Psoas muscle (tissue), 8 donors: ENCODE measurements at regions of chr2 and their contacts with region 1.

Region 1: GRCh38 chr2:102806250-102806837 is 44.5 kb downstream of the TMEM182 start:
- DNase-seq: peak; percentile 69 to 83
- ATAC-seq: peak; percentile 79 to 86 (median 84)
- H3K4me3 ChIP-seq: no peak overlapping the region
- H3K27ac ChIP-seq: peak overlapping the region; percentile 71
- H3K4me1 ChIP-seq: peaks cover 76% of the 10 kb centered on the region
- H3K27me3 ChIP-seq: no peaks in the 10 kb centered on the region
- CTCF ChIP-seq: peak; percentile 85

Region 2: DNA sequence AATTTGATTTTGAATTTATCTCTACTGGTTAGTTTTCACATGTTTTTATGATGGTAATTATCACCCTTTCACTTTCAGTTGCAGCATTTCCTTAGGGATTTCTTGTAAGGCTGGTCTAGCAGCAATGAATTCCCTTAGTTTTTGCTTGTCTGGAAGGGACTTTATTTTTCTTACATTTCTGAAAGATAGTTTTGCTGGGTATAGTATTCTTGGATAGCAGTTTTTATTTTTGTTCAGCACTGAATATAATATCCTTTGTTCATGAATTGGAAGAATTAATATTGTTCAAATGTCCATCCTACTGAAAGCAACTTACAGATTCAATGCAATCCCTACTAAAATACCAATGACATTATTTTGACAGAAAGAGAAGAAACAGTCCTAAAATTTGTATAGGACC is 589.3 kb before region 1 on chr2:
- intact Hi-C with region 1: no loop called
- DNase-seq: no peak
- ATAC-seq: no peak
- H3K4me3 ChIP-seq: no peak overlapping the region
- H3K27ac ChIP-seq: no peak overlapping the region
- H3K4me1 ChIP-seq: no peaks in the 10 kb centered on the region
- H3K27me3 ChIP-seq: no peaks in the 10 kb centered on the region
- CTCF ChIP-seq: no peak

Region 3: DNA sequence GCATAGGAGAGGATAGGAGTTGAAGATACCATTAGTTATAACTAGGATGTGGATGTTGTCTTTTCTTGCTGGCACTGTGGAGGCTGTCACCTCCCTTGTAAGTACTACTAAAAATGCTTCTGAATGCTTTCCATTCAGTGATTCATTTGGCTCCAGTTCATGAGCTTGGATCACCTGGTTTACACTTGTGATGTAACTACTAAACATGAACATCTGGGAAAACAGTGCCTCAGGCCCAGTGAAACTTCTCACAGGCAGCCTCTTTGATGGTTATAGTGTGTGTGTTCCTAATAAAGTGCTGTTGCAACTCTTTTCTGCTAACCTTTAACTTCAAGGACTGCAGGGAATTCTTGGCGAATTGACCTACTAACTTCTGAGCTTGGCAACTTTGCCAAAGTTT is 200.0 kb before region 1 on chr2:
- intact Hi-C with region 1: loop called in 1 of 2 experiments (anchors 10 kb)
- DNase-seq: no peak
- ATAC-seq: peak; percentile 45 to 83 (median 62)
- H3K4me3 ChIP-seq: no peak overlapping the region
- H3K27ac ChIP-seq: peak overlapping the region; percentile 83
- H3K4me1 ChIP-seq: peaks cover 17% of the 10 kb centered on the region
- H3K27me3 ChIP-seq: peaks cover 0 to 2% (median 0%) of the 10 kb centered on the region in 3 donors
- CTCF ChIP-seq: no peak

Region 4: GRCh38 chr2:102639429-102639828 is 166.9 kb before region 1 on chr2:
- intact Hi-C with region 1: no loop called
- DNase-seq: no peak
- ATAC-seq: no peak
- H3K4me3 ChIP-seq: no peak overlapping the region
- H3K27ac ChIP-seq: no peak overlapping the region
- H3K4me1 ChIP-seq: peaks cover 15% of the 10 kb centered on the region
- H3K27me3 ChIP-seq: no peaks in the 10 kb centered on the region
- CTCF ChIP-seq: no peak

Region 5: DNA sequence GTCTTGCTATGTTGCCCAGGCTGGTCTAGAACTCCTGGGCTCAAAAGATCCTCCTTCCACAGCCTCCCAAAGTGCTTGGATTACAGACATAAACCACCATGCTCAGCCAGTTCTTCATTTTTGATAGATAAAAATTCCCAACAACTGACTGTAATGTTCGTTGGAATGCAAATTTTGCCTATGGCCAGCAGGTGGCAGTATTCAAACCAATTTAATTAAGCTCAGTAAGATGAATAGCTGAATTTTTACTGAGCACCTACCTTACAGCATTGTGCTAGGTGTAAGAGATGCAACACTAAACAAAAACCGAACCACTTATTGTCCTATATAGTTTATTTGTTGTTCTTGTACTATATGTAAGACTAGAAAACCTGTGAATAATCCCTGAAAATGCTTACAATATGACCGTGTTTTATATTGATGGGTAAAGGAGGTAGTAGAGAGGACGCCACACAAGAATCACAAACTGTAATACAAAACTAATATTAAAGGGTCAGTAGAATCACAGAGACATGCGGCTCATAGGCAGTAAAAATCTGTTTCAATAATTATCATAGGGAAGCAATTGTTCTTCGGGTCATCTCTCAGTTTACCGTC is 52.7 kb before region 1 on chr2:
- intact Hi-C with region 1: loop called (anchors 1 to 2 kb)
- DNase-seq: no peak
- ATAC-seq: peak; percentile 61 to 76 (median 64)
- H3K4me3 ChIP-seq: no peak overlapping the region
- H3K27ac ChIP-seq: peak overlapping the region; percentile 66
- H3K4me1 ChIP-seq: peaks cover 23% of the 10 kb centered on the region
- H3K27me3 ChIP-seq: no peaks in the 10 kb centered on the region
- CTCF ChIP-seq: peak; percentile 82

Region 6: DNA sequence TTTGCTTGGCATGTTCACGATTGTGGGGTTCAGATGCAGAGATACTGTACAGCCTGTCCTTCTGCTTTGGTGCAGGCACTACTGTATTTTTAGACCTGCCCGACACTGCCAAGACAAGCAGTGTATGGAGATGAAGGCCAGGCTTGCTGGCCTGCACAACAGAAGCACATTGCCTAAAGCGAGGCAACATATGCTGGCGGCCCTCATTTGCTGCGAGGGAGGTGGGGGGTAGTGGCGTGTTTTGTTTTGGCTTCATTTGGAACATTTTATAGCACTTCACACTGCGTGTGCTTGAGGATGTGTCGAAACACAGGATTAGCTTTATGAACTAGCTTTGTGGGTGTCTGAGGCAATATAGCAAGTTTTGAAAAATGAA is 17.5 kb before region 1 on chr2:
- intact Hi-C with region 1: loop called in 1 of 2 experiments (anchors 2 kb)
- DNase-seq: peak in 1 of 2 donors; percentile 72
- ATAC-seq: peak; percentile 81 to 96 (median 88)
- H3K4me3 ChIP-seq: no peak overlapping the region
- H3K27ac ChIP-seq: peak overlapping the region; percentile 54
- H3K4me1 ChIP-seq: peaks cover 68% of the 10 kb centered on the region
- H3K27me3 ChIP-seq: no peaks in the 10 kb centered on the region
- CTCF ChIP-seq: no peak

Region 7: GRCh38 chr2:102872388-102872787 is 66.0 kb after region 1 on chr2:
- intact Hi-C with region 1: no loop called
- DNase-seq: no peak
- ATAC-seq: no peak
- H3K4me3 ChIP-seq: no peak overlapping the region
- H3K27ac ChIP-seq: no peak overlapping the region
- H3K4me1 ChIP-seq: no peaks in the 10 kb centered on the region
- H3K27me3 ChIP-seq: no peaks in the 10 kb centered on the region
- CTCF ChIP-seq: peak; percentile 12